ENCODE measurements at regions of chr20 and their contacts with region 1.

Region 1: DNA sequence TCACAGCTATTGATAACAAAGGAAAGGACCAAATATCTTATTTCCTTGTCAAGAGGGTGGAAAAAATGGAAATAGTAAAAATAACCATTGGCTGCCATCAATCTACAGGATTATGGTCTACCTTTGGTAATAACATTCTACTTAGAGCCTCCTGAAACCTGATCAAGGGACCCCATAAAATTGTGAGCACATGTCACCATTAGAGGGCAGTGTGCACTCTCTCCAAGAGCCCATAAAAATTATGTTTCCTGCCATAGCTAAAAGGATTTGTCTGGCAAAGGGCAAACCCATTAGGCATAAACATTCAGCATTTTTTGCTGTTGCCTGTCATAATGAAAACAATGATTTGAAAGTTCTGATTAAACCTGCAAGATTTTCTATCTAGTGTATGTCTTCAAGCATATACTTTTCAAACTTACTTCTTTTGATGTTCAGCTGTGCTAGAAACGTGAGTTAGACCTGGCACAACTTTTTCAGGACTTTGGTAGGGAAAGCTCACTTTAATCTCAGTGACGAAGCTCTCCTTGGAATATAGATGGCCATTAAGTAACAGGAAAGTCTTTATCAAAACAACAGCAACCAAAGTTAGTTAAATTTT is 120.7 kb upstream of the ZFP64 start:
- DNase-seq: peak; percentile 63 to 75
- H3K4me3 ChIP-seq: no peak overlapping the region
- H3K4me3 Mint-ChIP-seq: no peak overlapping the region
- H3K27ac Mint-ChIP-seq: no peak overlapping the region
- H3K4me1 ChIP-seq: no peaks in the 10 kb centered on the region
- H3K4me1 Mint-ChIP-seq: no peaks in the 10 kb centered on the region
- H3K27me3 ChIP-seq: no peaks in the 10 kb centered on the region
- H3K27me3 Mint-ChIP-seq: peaks cover 26% of the 10 kb centered on the region
- CTCF ChIP-seq: peak; percentile 91 to 97

Region 2: DNA sequence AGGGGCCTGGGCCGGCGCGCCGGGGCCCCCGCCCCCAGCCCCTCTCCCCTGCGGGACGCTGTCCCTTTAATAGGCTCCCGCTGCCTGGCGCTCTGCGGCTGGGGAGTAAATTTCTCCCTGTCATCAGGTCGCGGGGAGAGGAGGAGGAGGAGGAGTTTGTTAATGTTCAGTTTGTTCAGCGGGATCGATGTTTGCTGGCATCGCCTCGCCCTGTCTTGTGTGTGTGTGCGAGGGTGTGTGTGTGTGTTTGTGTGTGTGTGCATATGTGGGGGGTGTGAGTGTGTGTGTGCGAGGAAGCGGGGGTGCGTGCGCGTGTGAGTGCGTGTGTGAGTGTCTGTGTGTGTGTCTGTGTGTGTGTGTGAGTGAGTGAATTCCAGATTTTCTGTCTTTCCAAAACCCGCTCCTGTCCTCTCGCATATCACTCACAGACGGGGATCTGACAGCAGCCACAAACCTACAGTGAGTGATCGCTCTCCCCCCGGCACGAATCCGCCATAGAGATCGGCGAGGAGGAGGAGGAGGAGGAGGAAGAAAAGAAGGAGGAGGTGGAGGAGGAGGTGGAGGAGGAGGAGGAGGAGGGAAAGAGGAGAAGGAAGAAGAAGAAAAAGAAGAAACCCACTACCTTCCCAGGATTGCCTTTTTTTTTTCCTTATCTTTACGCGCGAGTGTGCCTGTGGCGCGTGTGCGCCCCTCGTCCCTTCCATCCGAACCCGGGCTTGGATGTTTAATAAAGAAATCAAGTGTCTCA is 660.1 kb after region 1 on chr20 and contains the start of gene TSHZ2:
- CTCF ChIA-PET with region 1: no interaction called
- POLR2A ChIA-PET with region 1: no interaction called
- intact Hi-C with region 1: loop called (anchors 10 kb)
- DNase-seq: peak in 1 of 2 experiments; percentile 29
- H3K4me3 ChIP-seq: peak within 1 kb of the TSS; percentile 6
- H3K4me3 Mint-ChIP-seq: peak within 1 kb of the TSS; percentile 70
- H3K27ac Mint-ChIP-seq: peak within 1 kb of the TSS; percentile 0
- H3K4me1 ChIP-seq: peaks cover 5% of the 10 kb centered on the region; the same call in 1 of the 2 replicates
- H3K4me1 Mint-ChIP-seq: peaks cover 12% of the 10 kb centered on the region
- H3K27me3 ChIP-seq: 0 out of 2 replicates have a peak, but pooled peaks cover 1% of the 10 kb centered on the region
- H3K27me3 Mint-ChIP-seq: peaks cover 40% of the 10 kb centered on the region
- CTCF ChIP-seq: no peak
- total RNA-seq, gene TSHZ2: 0.07 TPM in 2 replicates

Measured in Caco-2 (cell line).